Mammary epithelial cell (primary cell): ENCODE measurements at regions of chr11 and their contacts with region 1.

Region 1: GRCh38 chr11:47186076-47186936 is at the start of gene PACSIN3:
- DNase-seq: peak; percentile 26
- H3K4me3 ChIP-seq: peak within 1 kb of the TSS; percentile 50 to 84 (median 62)
- H3K27ac ChIP-seq: peak within 1 kb of the TSS; percentile 74
- H3K4me1 ChIP-seq: peaks cover 36% of the 10 kb centered on the region
- H3K27me3 ChIP-seq: no peaks in the 10 kb centered on the region
- CTCF ChIP-seq: no peak
- total RNA-seq, gene PACSIN3: 20.7 to 53.4 TPM

Region 2: GRCh38 chr11:47071791-47072261 is 114.5 kb before region 1 on chr11:
- CTCF ChIA-PET with region 1: no interaction called
- dilution Hi-C with region 1: no loop called
- in situ Hi-C with region 1: no loop called
- intact Hi-C with region 1: no loop called
- DNase-seq: peak; percentile 1
- H3K4me3 ChIP-seq: no peak overlapping the region
- H3K27ac ChIP-seq: no peak overlapping the region
- H3K4me1 ChIP-seq: no peaks in the 10 kb centered on the region
- H3K27me3 ChIP-seq: no peaks in the 10 kb centered on the region
- CTCF ChIP-seq: no peak

Region 3: GRCh38 chr11:47124675-47125074 is 61.6 kb before region 1 on chr11:
- CTCF ChIA-PET with region 1: no interaction called
- dilution Hi-C with region 1: no loop called
- in situ Hi-C with region 1: no loop called
- intact Hi-C with region 1: no loop called
- DNase-seq: no peak
- H3K4me3 ChIP-seq: no peak overlapping the region
- H3K27ac ChIP-seq: no peak overlapping the region
- H3K4me1 ChIP-seq: no peaks in the 10 kb centered on the region
- H3K27me3 ChIP-seq: no peaks in the 10 kb centered on the region
- CTCF ChIP-seq: no peak

Region 4: DNA sequence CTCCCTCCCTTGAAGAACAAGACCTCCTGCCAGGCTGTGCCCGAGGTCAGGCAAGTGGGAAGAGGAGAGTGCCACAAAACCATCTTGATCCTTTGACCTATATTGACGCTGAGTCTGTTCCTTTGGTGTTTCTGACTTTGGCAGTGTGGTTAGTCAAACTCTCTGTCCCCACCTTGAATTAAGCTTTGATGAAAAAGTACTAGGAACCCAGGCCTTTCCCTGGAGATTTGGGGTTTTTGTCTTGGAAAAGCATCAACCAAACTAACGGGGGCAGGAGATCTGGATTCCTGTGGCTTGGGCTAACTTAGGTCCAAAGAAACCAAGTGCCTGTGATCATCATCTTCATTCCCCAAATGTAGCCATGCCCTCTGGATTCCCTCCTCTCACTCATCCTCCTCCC is 50.0 kb before region 1 on chr11:
- CTCF ChIA-PET with region 1: no interaction called
- dilution Hi-C with region 1: loop called (anchors 5 kb)
- in situ Hi-C with region 1: no loop called
- intact Hi-C with region 1: no loop called
- DNase-seq: no peak
- H3K4me3 ChIP-seq: no peak overlapping the region
- H3K27ac ChIP-seq: no peak overlapping the region
- H3K4me1 ChIP-seq: no peaks in the 10 kb centered on the region
- H3K27me3 ChIP-seq: no peaks in the 10 kb centered on the region
- CTCF ChIP-seq: no peak

Region 5: GRCh38 chr11:47213985-47214564 is 27.8 kb after region 1 on chr11:
- CTCF ChIA-PET with region 1: no interaction called
- dilution Hi-C with region 1: no loop called
- in situ Hi-C with region 1: no loop called
- intact Hi-C with region 1: loop called (anchors 1 kb)
- DNase-seq: peak; percentile 89
- H3K4me3 ChIP-seq: peak overlapping the region; percentile 8 to 47 (median 38)
- H3K27ac ChIP-seq: peak overlapping the region; percentile 73
- H3K4me1 ChIP-seq: peaks cover 16% of the 10 kb centered on the region
- H3K27me3 ChIP-seq: no peaks in the 10 kb centered on the region
- CTCF ChIP-seq: no peak

Region 6: GRCh38 chr11:47233989-47234668 is 47.8 kb after region 1 on chr11:
- CTCF ChIA-PET with region 1: interaction called, 19 read pairs
- dilution Hi-C with region 1: loop called (anchors 5 kb)
- in situ Hi-C with region 1: no loop called
- intact Hi-C with region 1: loop called (anchors 5 kb)
- DNase-seq: peak; percentile 52
- H3K4me3 ChIP-seq: no peak overlapping the region
- H3K27ac ChIP-seq: peak overlapping the region; percentile 2
- H3K4me1 ChIP-seq: peaks cover 19% of the 10 kb centered on the region
- H3K27me3 ChIP-seq: no peaks in the 10 kb centered on the region
- CTCF ChIP-seq: peak in 1 of 2 donors; percentile 34

Region 7: GRCh38 chr11:47259178-47259977 is 73.1 kb after region 1 on chr11:
- CTCF ChIA-PET with region 1: no interaction called
- dilution Hi-C with region 1: loop called (anchors 5 kb)
- in situ Hi-C with region 1: no loop called
- intact Hi-C with region 1: no loop called
- DNase-seq: no peak
- H3K4me3 ChIP-seq: no peak overlapping the region
- H3K27ac ChIP-seq: no peak overlapping the region
- H3K4me1 ChIP-seq: peaks cover 11% of the 10 kb centered on the region
- H3K27me3 ChIP-seq: no peaks in the 10 kb centered on the region
- CTCF ChIP-seq: peak; percentile 48 to 70

Region 8: DNA sequence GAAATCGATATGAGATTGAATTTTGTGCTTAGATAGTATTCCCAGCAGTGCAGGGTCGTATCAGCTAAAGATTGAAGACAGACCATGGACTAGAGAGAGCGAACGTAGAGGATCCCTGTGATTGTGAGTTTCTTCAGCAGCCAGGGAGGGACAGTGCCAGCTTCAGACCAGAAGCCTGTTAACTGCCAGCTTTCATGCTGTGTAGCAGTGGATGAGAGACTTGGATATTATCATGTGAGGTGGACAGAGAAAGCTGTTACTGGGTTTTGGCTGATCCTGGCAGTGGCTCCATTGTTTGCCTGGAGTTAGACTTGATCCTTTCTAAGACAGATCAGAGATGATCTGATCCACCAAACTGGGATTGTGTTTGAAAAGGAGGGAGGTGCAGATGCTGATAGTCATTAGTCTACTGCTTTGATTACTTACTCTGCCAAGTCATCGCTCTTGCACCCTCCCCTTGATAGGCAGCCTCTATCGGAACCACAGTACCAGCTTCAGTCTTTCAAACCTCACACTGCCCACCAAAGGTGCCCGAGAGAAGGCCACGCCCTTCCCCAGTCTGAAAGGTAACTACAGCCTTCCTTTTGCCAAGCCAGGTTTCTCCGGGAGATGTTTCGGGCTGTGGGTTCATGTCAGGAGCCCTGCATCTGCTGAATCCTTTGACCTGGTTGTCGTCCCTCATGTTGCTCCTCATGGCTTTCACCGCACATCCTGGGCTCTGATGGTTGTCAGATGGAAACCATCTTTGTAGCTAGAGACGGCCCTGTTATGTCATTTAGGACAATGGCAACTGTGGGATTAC is 99.9 kb after region 1 on chr11:
- CTCF ChIA-PET with region 1: no interaction called
- dilution Hi-C with region 1: loop called (anchors 5 kb)
- in situ Hi-C with region 1: no loop called
- intact Hi-C with region 1: no loop called
- DNase-seq: no peak
- H3K4me3 ChIP-seq: no peak overlapping the region
- H3K27ac ChIP-seq: no peak overlapping the region
- H3K4me1 ChIP-seq: no peaks in the 10 kb centered on the region
- H3K27me3 ChIP-seq: no peaks in the 10 kb centered on the region
- CTCF ChIP-seq: no peak

Region 9: GRCh38 chr11:47329987-47330931 is 144.0 kb after region 1 on chr11:
- CTCF ChIA-PET with region 1: no interaction called
- dilution Hi-C with region 1: loop called (anchors 5 kb)
- in situ Hi-C with region 1: no loop called
- intact Hi-C with region 1: no loop called
- DNase-seq: no peak
- H3K4me3 ChIP-seq: no peak overlapping the region
- H3K27ac ChIP-seq: no peak overlapping the region
- H3K4me1 ChIP-seq: no peaks in the 10 kb centered on the region
- H3K27me3 ChIP-seq: no peaks in the 10 kb centered on the region
- CTCF ChIP-seq: peak in 1 of 2 donors; percentile 3